Activated B cell treated with CpG ODN at 0.5 μM for 24 hours (primary cell): ENCODE measurements at regions of chr1 and their contacts with region 1.

Region 1: GRCh38 chr1:108559215-108560186 is at the start of gene EEIG2:
- DNase-seq: peak; percentile 90
- ATAC-seq: peak; percentile 88
- H3K4me3 Mint-ChIP-seq: peak within 1 kb of the TSS; percentile 93
- H3K27ac Mint-ChIP-seq: peak within 1 kb of the TSS; percentile 90
- H3K4me1 Mint-ChIP-seq: peaks cover 24% of the 10 kb centered on the region
- H3K27me3 Mint-ChIP-seq: no peaks in the 10 kb centered on the region
- CTCF ChIP-seq: no peak
- total RNA-seq, gene EEIG2: 7.0 and 7.1 TPM in 2 replicates

Region 2: DNA sequence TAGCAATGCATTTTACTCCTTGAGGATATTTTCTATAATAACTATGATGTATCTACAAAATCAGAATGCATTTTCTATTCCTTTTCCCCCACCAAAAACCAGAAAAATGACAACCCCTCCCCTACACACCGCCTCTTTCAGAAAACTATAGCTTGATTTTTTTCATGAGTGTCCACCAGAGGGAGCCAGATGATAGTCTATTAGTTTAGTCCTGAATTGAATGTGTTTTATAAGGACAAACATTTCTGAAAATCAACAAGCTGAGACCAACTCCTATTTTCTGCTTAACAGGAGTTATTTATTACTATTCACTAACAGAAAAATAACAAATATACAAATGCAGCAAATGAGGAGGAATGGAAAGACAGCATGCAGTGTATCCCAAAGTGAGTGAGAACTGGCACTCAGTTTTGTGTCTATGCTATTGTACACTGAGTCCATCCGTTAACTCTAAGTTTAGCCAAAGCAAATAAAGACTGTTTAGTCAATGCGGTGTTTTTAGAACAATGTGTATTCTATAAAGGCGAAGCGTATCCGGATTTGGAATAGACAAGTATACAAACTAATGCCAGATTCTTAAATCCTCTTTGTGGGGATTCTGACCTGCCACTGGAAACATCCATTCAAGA is 777.2 kb before region 1 on chr1:
- CTCF ChIA-PET with region 1: interaction called, 12 read pairs
- POLR2A ChIA-PET with region 1: interaction called, 4 read pairs
- intact Hi-C with region 1: loop called (anchors 2 kb)
- DNase-seq: no peak
- ATAC-seq: peak; percentile 19
- H3K4me3 Mint-ChIP-seq: no peak overlapping the region
- H3K27ac Mint-ChIP-seq: no peak overlapping the region
- H3K4me1 Mint-ChIP-seq: peaks cover 54% of the 10 kb centered on the region
- H3K27me3 Mint-ChIP-seq: no peaks in the 10 kb centered on the region
- CTCF ChIP-seq: peak; percentile 83

Region 3: GRCh38 chr1:108512239-108512981 is 47.1 kb before region 1 on chr1:
- CTCF ChIA-PET with region 1: interaction called, 237 read pairs
- POLR2A ChIA-PET with region 1: interaction called, 13 read pairs
- intact Hi-C with region 1: loop called (anchors 1 kb)
- DNase-seq: no peak
- ATAC-seq: peak; percentile 85
- H3K4me3 Mint-ChIP-seq: no peak overlapping the region
- H3K27ac Mint-ChIP-seq: no peak overlapping the region
- H3K4me1 Mint-ChIP-seq: no peaks in the 10 kb centered on the region
- H3K27me3 Mint-ChIP-seq: no peaks in the 10 kb centered on the region
- CTCF ChIP-seq: peak; percentile 95

Region 4: GRCh38 chr1:108617008-108617723 is 57.7 kb after region 1 on chr1:
- CTCF ChIA-PET with region 1: no interaction called
- POLR2A ChIA-PET with region 1: no interaction called
- intact Hi-C with region 1: no loop called
- DNase-seq: no peak
- ATAC-seq: no peak
- H3K4me3 Mint-ChIP-seq: no peak overlapping the region
- H3K27ac Mint-ChIP-seq: no peak overlapping the region
- H3K4me1 Mint-ChIP-seq: no peaks in the 10 kb centered on the region
- H3K27me3 Mint-ChIP-seq: no peaks in the 10 kb centered on the region
- CTCF ChIP-seq: no peak

Region 5: GRCh38 chr1:108627256-108627655 is 67.8 kb after region 1 on chr1:
- CTCF ChIA-PET with region 1: no interaction called
- POLR2A ChIA-PET with region 1: no interaction called
- intact Hi-C with region 1: no loop called
- DNase-seq: no peak
- ATAC-seq: no peak
- H3K4me3 Mint-ChIP-seq: no peak overlapping the region
- H3K27ac Mint-ChIP-seq: no peak overlapping the region
- H3K4me1 Mint-ChIP-seq: no peaks in the 10 kb centered on the region
- H3K27me3 Mint-ChIP-seq: no peaks in the 10 kb centered on the region
- CTCF ChIP-seq: no peak

Region 6: GRCh38 chr1:108643492-108644335 is 84.2 kb after region 1 on chr1:
- CTCF ChIA-PET with region 1: interaction called, 22 read pairs
- POLR2A ChIA-PET with region 1: interaction called, 4 read pairs
- intact Hi-C with region 1: loop called (anchors 1 kb)
- DNase-seq: no peak
- ATAC-seq: peak; percentile 57
- H3K4me3 Mint-ChIP-seq: no peak overlapping the region
- H3K27ac Mint-ChIP-seq: no peak overlapping the region
- H3K4me1 Mint-ChIP-seq: peaks cover 19% of the 10 kb centered on the region
- H3K27me3 Mint-ChIP-seq: no peaks in the 10 kb centered on the region
- CTCF ChIP-seq: no peak

Region 7: GRCh38 chr1:108877348-108878159 is 318.1 kb after region 1 on chr1:
- CTCF ChIA-PET with region 1: no interaction called
- POLR2A ChIA-PET with region 1: no interaction called
- intact Hi-C with region 1: loop called (anchors 5 kb)
- DNase-seq: no peak
- ATAC-seq: no peak
- H3K4me3 Mint-ChIP-seq: peak overlapping the region; percentile 97
- H3K27ac Mint-ChIP-seq: peak overlapping the region; percentile 85
- H3K4me1 Mint-ChIP-seq: peaks cover 13% of the 10 kb centered on the region
- H3K27me3 Mint-ChIP-seq: no peaks in the 10 kb centered on the region
- CTCF ChIP-seq: no peak

Region 8: GRCh38 chr1:109426278-109427170 is 867.0 kb after region 1 on chr1 and contains the start of gene PSMA5:
- CTCF ChIA-PET with region 1: no interaction called
- POLR2A ChIA-PET with region 1: no interaction called
- intact Hi-C with region 1: loop called (anchors 10 kb)
- DNase-seq: peak; percentile 81
- ATAC-seq: peak; percentile 97
- H3K4me3 Mint-ChIP-seq: peak within 1 kb of the TSS; percentile 96
- H3K27ac Mint-ChIP-seq: peak within 1 kb of the TSS; percentile 97
- H3K4me1 Mint-ChIP-seq: peaks cover 37% of the 10 kb centered on the region
- H3K27me3 Mint-ChIP-seq: no peaks in the 10 kb centered on the region
- CTCF ChIP-seq: no peak
- total RNA-seq, gene PSMA5: 105 and 125 TPM in 2 replicates

Region 9: GRCh38 chr1:109667452-109668122 is 1108.1 kb after region 1 on chr1 and contains the start of gene GSTM2:
- CTCF ChIA-PET with region 1: no interaction called
- POLR2A ChIA-PET with region 1: no interaction called
- intact Hi-C with region 1: no loop called
- DNase-seq: peak; percentile 63
- ATAC-seq: peak; percentile 100
- H3K4me3 Mint-ChIP-seq: peak within 1 kb of the TSS; percentile 80
- H3K27ac Mint-ChIP-seq: no peak within 1 kb of the TSS
- H3K4me1 Mint-ChIP-seq: peaks cover 21% of the 10 kb centered on the region
- H3K27me3 Mint-ChIP-seq: no peaks in the 10 kb centered on the region
- CTCF ChIP-seq: no peak
- total RNA-seq, gene GSTM2: 9.2 and 11.0 TPM in 2 replicates